ENCODE measurements at regions of chr3 and their contacts with region 1.

Region 1: DNA sequence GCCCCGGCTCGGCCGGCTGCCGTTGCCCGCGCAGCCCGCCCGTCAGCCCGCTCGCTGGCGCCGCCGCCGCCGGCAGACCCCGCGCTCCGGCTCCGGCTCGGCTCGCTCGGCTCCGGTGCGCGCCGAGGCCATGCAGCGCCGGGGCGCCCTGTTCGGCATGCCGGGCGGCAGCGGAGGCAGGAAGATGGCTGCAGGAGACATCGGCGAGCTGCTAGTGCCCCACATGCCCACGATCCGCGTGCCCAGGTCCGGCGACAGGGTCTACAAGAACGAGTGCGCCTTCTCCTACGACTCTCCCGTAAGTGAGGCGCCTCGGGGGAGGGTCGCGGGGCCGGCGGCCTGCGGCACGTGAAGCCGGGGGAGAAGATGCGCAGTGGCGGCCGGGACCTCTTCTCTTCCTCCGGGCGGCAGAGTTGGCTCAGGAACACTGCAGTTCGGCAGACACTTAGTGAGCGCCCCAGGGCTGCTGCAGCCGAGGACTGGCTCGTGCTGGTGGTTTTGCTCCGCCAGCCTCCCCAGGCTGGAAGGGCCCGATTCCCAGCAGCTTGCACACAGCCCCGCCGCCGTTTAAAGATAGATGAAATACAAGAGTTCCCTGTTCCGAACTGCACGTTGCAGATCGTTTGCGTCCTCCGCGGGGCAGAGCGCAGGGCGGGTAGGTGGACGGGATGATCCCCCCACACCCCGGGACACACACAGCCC is 407 bp downstream of the USP13 start:
- DNase-seq: peak; percentile 46 to 74 (median 71)
- ATAC-seq: peak; percentile 71
- H3K4me3 ChIP-seq: peak overlapping the region; percentile 83
- H3K4me3 Mint-ChIP-seq: peak overlapping the region; percentile 87 to 98 (median 94)
- H3K27ac ChIP-seq: peak overlapping the region; percentile 74
- H3K27ac Mint-ChIP-seq: peak overlapping the region; percentile 84 to 90 (median 87)
- H3K4me1 ChIP-seq: peaks cover 0 to 7% of the 10 kb centered on the region in 2 donors
- H3K4me1 Mint-ChIP-seq: peaks cover 20 to 55% (median 41%) of the 10 kb centered on the region in 7 donors
- H3K27me3 ChIP-seq: no peaks in the 10 kb centered on the region
- H3K27me3 Mint-ChIP-seq: peaks cover 0 to 19% (median 0%) of the 10 kb centered on the region in 5 donors

Region 2: GRCh38 chr3:179071550-179072397 is 581.5 kb before region 1 on chr3 and contains the start of gene ZMAT3:
- CTCF ChIA-PET with region 1: no interaction called
- POLR2A ChIA-PET with region 1: no interaction called
- intact Hi-C with region 1: loop called (anchors 1 to 2 kb)
- DNase-seq: peak; percentile 72 to 88 (median 83)
- ATAC-seq: peak; percentile 88
- H3K4me3 ChIP-seq: peak within 1 kb of the TSS; percentile 74
- H3K4me3 Mint-ChIP-seq: peak within 1 kb of the TSS; percentile 97 to 100 (median 98)
- H3K27ac ChIP-seq: peak within 1 kb of the TSS; percentile 87
- H3K27ac Mint-ChIP-seq: peak within 1 kb of the TSS; percentile 89 to 98 (median 95)
- H3K4me1 ChIP-seq: peaks cover 13 to 18% of the 10 kb centered on the region in 2 donors
- H3K4me1 Mint-ChIP-seq: peaks cover 24 to 81% (median 59%) of the 10 kb centered on the region in 7 donors
- H3K27me3 ChIP-seq: no peaks in the 10 kb centered on the region
- H3K27me3 Mint-ChIP-seq: no peaks in the 10 kb centered on the region
- total RNA-seq, gene ZMAT3: 20.6 to 23.7 (median 21.7) TPM

Region 3: GRCh38 chr3:179091113-179091512 is 562.1 kb before region 1 on chr3:
- CTCF ChIA-PET with region 1: no interaction called
- POLR2A ChIA-PET with region 1: no interaction called
- intact Hi-C with region 1: no loop called
- DNase-seq: no peak
- ATAC-seq: no peak
- H3K4me3 ChIP-seq: no peak overlapping the region
- H3K4me3 Mint-ChIP-seq: no peak overlapping the region
- H3K27ac ChIP-seq: no peak overlapping the region
- H3K27ac Mint-ChIP-seq: no peak overlapping the region
- H3K4me1 ChIP-seq: no peaks in the 10 kb centered on the region
- H3K4me1 Mint-ChIP-seq: peaks cover 0 to 16% (median 5%) of the 10 kb centered on the region in 7 donors
- H3K27me3 ChIP-seq: no peaks in the 10 kb centered on the region
- H3K27me3 Mint-ChIP-seq: peaks cover 0 to 18% (median 0%) of the 10 kb centered on the region in 5 donors

Region 4: DNA sequence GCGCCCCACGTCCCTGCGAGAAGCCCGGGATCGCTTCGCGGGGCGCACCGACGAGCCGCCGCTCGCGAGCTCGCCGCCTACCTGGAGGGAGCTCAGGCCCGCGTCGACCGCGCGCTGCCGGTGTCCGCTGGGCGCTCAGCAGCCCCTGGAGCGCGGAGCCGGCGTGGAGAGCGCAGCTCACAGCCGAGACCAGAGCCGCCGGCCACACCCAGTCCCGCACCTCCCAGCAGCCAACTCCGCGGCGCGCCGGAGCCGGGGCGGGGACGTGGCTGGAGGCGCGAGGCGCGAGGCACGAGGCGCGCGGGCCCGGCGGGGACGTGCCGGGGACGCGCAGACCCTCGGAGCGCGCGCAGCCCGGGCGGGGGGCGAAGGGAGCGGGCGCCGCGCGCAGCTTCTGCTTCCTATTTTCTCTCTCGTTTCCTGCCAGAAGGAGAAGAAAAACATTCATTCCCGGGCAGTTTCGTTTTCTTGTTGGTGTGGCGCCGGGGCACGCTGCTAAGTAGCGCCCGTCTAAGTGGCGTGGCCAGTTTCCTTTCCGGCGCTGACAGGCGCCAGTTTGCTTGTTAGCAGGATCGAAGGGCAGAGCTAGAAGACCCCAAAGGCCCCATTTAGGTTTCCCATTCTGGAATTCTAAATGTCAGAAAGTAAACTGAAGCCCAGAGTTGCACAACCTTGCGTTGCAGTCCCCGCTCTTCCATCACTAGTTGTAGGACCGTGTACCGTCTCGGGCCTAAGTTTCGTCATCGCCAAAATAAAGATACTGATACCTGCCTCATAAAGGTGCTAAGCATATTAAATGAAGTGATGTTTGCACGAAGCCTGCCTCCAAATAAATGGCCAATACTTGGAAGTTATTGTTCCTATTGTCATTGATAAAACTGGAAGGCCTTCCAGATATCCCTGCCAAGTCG is 201.7 kb before region 1 on chr3 and contains the start of gene GNB4:
- CTCF ChIA-PET with region 1: no interaction called
- POLR2A ChIA-PET with region 1: no interaction called
- intact Hi-C with region 1: loop called in 1 of 2 experiments (anchors 5 kb)
- DNase-seq: peak in 8 of 9 donors; percentile 8 to 72 (median 32)
- ATAC-seq: peak; percentile 91
- H3K4me3 ChIP-seq: peak within 1 kb of the TSS; percentile 39
- H3K4me3 Mint-ChIP-seq: peak within 1 kb of the TSS; percentile 77 to 90 (median 86)
- H3K27ac ChIP-seq: no peak within 1 kb of the TSS
- H3K27ac Mint-ChIP-seq: peak within 1 kb of the TSS in 2 of 9 donors; percentile 62 to 84
- H3K4me1 ChIP-seq: peaks cover 0 to 10% of the 10 kb centered on the region in 2 donors
- H3K4me1 Mint-ChIP-seq: peaks cover 14 to 29% (median 23%) of the 10 kb centered on the region in 7 donors
- H3K27me3 ChIP-seq: peaks cover 4% of the 10 kb centered on the region in 2 donors
- H3K27me3 Mint-ChIP-seq: peaks cover 57 to 87% (median 75%) of the 10 kb centered on the region in 5 donors
- total RNA-seq, gene GNB4: 1.1 to 11.3 (median 2.1) TPM

Region 5: DNA sequence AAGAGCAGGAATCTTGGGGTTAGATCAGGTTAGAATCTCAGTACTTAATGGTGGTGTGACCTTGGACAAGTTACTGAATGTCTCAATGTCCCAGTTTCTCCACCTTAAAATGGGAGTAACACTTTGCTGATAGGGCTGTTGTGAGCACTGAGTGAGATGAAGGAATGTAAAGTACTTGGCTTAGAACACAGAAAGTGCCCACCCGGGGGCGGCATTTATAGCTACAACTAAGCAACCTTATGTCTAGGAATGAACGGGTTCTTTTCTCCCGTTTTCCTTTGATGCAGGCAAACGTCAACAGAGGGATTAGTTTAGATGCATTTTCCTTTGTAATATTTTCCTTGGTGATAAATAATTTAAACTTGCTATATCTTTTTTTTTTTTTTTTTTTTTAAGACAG is 176.2 kb after region 1 on chr3:
- CTCF ChIA-PET with region 1: no interaction called
- POLR2A ChIA-PET with region 1: no interaction called
- intact Hi-C with region 1: loop called in 1 of 2 experiments (anchors 10 kb)
- DNase-seq: no peak
- ATAC-seq: no peak
- H3K4me3 ChIP-seq: no peak overlapping the region
- H3K4me3 Mint-ChIP-seq: no peak overlapping the region
- H3K27ac ChIP-seq: no peak overlapping the region
- H3K27ac Mint-ChIP-seq: no peak overlapping the region
- H3K4me1 ChIP-seq: no peaks in the 10 kb centered on the region
- H3K4me1 Mint-ChIP-seq: no peaks in the 10 kb centered on the region
- H3K27me3 ChIP-seq: no peaks in the 10 kb centered on the region
- H3K27me3 Mint-ChIP-seq: peaks cover 0 to 10% (median 7%) of the 10 kb centered on the region in 5 donors

Region 6: GRCh38 chr3:179865861-179866505 is 212.7 kb after region 1 on chr3:
- CTCF ChIA-PET with region 1: no interaction called
- POLR2A ChIA-PET with region 1: no interaction called
- intact Hi-C with region 1: no loop called
- DNase-seq: no peak
- ATAC-seq: no peak
- H3K4me3 ChIP-seq: no peak overlapping the region
- H3K4me3 Mint-ChIP-seq: no peak overlapping the region
- H3K27ac ChIP-seq: no peak overlapping the region
- H3K27ac Mint-ChIP-seq: no peak overlapping the region
- H3K4me1 ChIP-seq: no peaks in the 10 kb centered on the region
- H3K4me1 Mint-ChIP-seq: no peaks in the 10 kb centered on the region
- H3K27me3 ChIP-seq: no peaks in the 10 kb centered on the region
- H3K27me3 Mint-ChIP-seq: peaks cover 0 to 5% (median 0%) of the 10 kb centered on the region in 5 donors

Region 7: DNA sequence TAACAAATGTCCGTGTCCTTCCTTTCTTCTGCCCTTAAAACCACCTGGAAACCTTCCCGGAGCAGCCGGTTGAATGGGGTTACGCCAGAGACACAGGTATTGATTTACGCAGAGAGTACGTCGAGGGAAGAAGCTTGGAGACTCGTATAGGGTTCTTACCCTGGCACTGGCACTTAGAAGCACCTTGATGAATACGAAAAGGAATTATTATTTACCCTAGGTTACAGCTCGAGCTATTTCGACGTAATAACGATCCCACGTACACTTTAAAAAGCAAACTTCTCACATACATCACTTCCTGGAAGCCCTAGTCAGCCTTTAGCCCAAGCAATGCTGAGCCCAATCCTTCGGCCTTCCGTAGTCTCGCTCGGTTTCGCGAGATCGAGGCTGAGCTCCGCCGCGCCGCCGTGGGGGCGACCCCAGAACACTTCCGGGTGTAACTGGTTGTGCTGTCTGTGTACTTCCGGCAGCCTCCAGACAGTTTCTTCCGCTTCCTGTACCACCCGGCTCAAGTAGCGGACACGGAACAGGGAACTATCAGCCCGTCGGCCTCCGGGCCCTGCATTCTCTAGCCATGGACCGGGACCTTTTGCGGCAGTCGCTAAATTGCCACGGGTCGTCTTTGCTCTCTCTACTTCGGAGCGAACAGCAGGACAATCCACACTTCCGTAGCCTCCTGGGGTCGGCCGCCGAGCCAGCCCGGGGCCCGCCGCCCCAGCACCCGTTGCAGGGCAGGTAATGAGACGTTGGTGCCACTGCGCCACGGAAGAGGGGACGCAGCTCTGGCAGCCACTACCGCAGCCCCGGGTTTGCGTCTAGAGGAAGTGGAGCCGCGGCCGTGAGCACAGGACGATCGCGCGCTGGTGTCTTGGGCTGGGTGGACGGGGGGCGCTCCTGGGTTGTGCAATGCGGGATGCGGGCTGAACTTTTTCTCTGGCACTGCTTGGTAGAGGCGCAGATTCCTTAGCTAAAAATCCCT is 948.7 kb after region 1 on chr3 and contains the start of gene TTC14:
- CTCF ChIA-PET with region 1: no interaction called
- POLR2A ChIA-PET with region 1: interaction called, 3 read pairs
- intact Hi-C with region 1: loop called (anchors 1 to 2 kb)
- DNase-seq: peak; percentile 80 to 94 (median 92)
- ATAC-seq: peak; percentile 94
- H3K4me3 ChIP-seq: peak within 1 kb of the TSS; percentile 92
- H3K4me3 Mint-ChIP-seq: peak within 1 kb of the TSS; percentile 88 to 98 (median 96)
- H3K27ac ChIP-seq: peak within 1 kb of the TSS; percentile 88
- H3K27ac Mint-ChIP-seq: peak within 1 kb of the TSS; percentile 92 to 99 (median 97)
- H3K4me1 ChIP-seq: peaks cover 12% of the 10 kb centered on the region in 2 donors
- H3K4me1 Mint-ChIP-seq: peaks cover 14 to 47% (median 39%) of the 10 kb centered on the region in 7 donors
- H3K27me3 ChIP-seq: no peaks in the 10 kb centered on the region
- H3K27me3 Mint-ChIP-seq: peaks cover 4 to 23% (median 18%) of the 10 kb centered on the region in 5 donors
- total RNA-seq, gene TTC14: 76.5 to 201 (median 103) TPM

Region 8: GRCh38 chr3:180912304-180913296 is 1259.4 kb after region 1 on chr3 and contains the start of gene FXR1:
- CTCF ChIA-PET with region 1: no interaction called
- POLR2A ChIA-PET with region 1: no interaction called
- intact Hi-C with region 1: loop called in 1 of 2 experiments (anchors 2 kb)
- DNase-seq: peak; percentile 80 to 91 (median 89)
- ATAC-seq: peak; percentile 95
- H3K4me3 ChIP-seq: peak within 1 kb of the TSS; percentile 80
- H3K4me3 Mint-ChIP-seq: peak within 1 kb of the TSS; percentile 91 to 98 (median 96)
- H3K27ac ChIP-seq: peak within 1 kb of the TSS; percentile 97
- H3K27ac Mint-ChIP-seq: peak within 1 kb of the TSS; percentile 94 to 100 (median 97)
- H3K4me1 ChIP-seq: peaks cover 17 to 25% of the 10 kb centered on the region in 2 donors
- H3K4me1 Mint-ChIP-seq: peaks cover 35 to 76% (median 67%) of the 10 kb centered on the region in 7 donors
- H3K27me3 ChIP-seq: no peaks in the 10 kb centered on the region
- H3K27me3 Mint-ChIP-seq: no peaks in the 10 kb centered on the region
- total RNA-seq, gene FXR1: 108 to 151 (median 129) TPM